Naive thymus-derived CD4-positive, alpha-beta T cell (primary cell): ENCODE measurements at regions of chr12 and their contacts with region 1.

Region 1: GRCh38 chr12:46153268-46153872 is 115.5 kb downstream of the SLC38A1 start:
- DNase-seq: peak in 6 of 9 donors; percentile 26 to 61 (median 47)
- ATAC-seq: no peak
- H3K4me3 ChIP-seq: no peak overlapping the region
- H3K4me3 Mint-ChIP-seq: peak overlapping the region in 4 of 10 donors; percentile 31 to 52 (median 40)
- H3K27ac ChIP-seq: no peak overlapping the region
- H3K27ac Mint-ChIP-seq: no peak overlapping the region
- H3K4me1 ChIP-seq: peaks cover 0 to 17% of the 10 kb centered on the region in 2 donors
- H3K4me1 Mint-ChIP-seq: peaks cover 3 to 31% (median 13%) of the 10 kb centered on the region in 7 donors
- H3K27me3 ChIP-seq: no peaks in the 10 kb centered on the region
- H3K27me3 Mint-ChIP-seq: peaks cover 0 to 19% (median 4%) of the 10 kb centered on the region in 5 donors

Region 2: DNA sequence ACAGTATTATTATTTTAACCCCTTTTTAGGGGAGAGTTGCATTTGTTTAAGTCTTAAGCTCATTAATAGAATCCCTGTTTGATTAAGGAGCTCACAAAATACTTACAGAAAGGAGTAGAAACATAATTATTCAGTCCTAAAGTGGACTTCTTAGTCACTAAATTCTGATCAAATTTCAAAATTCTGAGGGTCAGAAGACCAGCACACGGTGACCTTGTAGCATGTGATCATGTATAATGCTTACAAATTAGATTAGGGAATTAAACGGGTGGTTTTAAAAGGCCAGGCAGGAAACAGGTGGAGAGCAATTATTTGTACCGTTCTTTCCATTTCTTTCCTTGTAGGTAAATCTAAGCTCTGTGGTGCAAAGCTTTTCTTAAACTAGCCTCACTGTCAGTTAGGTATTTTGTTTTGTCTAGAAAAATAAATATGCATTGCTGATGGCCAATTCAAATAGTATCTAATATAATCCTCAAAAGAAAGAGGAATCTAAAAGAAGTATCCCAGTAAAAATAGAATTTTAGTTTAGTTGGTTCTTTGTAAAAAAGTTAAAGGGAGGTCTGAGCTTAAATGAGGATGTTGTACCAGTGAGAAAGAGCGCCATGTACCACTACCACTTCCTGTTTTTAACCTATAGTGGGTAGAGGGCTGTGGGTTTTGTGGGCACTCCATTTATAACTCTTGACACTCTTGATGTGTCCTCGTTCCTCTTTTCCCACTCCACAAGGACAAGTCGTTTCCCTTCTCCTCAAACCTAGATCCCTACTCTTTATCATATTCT is 64.4 kb after region 1 on chr12:
- CTCF ChIA-PET with region 1: no interaction called
- POLR2A ChIA-PET with region 1: interaction called, 4 read pairs
- intact Hi-C with region 1: loop called in 1 of 2 experiments (anchors 2 kb)
- DNase-seq: peak in 8 of 9 donors; percentile 58 to 87 (median 84)
- ATAC-seq: peak; percentile 54
- H3K4me3 ChIP-seq: peak overlapping the region; percentile 41
- H3K4me3 Mint-ChIP-seq: peak overlapping the region; percentile 74 to 89 (median 81)
- H3K27ac ChIP-seq: peak overlapping the region; percentile 78
- H3K27ac Mint-ChIP-seq: peak overlapping the region; percentile 89 to 100 (median 99)
- H3K4me1 ChIP-seq: peaks cover 95% of the 10 kb centered on the region in 2 donors
- H3K4me1 Mint-ChIP-seq: peaks cover 69 to 100% (median 98%) of the 10 kb centered on the region in 7 donors
- H3K27me3 ChIP-seq: no peaks in the 10 kb centered on the region
- H3K27me3 Mint-ChIP-seq: no peaks in the 10 kb centered on the region

Region 3: GRCh38 chr12:46364777-46365580 is 211.6 kb after region 1 on chr12:
- CTCF ChIA-PET with region 1: no interaction called
- POLR2A ChIA-PET with region 1: interaction called, 4 read pairs
- intact Hi-C with region 1: loop called (anchors 2 to 5 kb)
- DNase-seq: no peak
- ATAC-seq: no peak
- H3K4me3 ChIP-seq: no peak overlapping the region
- H3K4me3 Mint-ChIP-seq: peak overlapping the region in 3 of 10 donors; percentile 27 to 56 (median 45)
- H3K27ac ChIP-seq: peak overlapping the region; percentile 38
- H3K27ac Mint-ChIP-seq: peak overlapping the region in 7 of 9 donors; percentile 34 to 78 (median 61)
- H3K4me1 ChIP-seq: peaks cover 31 to 50% of the 10 kb centered on the region in 2 donors
- H3K4me1 Mint-ChIP-seq: peaks cover 51 to 92% (median 86%) of the 10 kb centered on the region in 7 donors
- H3K27me3 ChIP-seq: no peaks in the 10 kb centered on the region
- H3K27me3 Mint-ChIP-seq: no peaks in the 10 kb centered on the region

Region 4: DNA sequence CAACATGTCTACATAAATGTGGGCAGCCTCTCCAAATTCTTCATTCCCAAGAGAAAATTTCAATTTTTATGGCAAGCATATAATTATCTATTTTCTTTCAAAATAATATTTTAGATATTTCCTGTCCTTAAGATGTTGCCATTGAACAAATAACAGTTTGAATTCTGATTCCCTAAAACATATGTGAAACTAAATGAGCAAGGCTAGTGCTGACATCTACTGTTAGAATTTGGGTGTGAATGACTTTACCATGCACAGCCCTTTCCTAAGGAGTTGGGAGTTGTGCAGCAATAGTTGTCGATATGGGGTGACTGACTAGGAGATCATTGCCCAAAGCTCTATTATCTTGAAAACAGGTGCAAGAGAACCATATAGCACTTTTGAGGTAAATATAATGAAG is 780.6 kb after region 1 on chr12:
- CTCF ChIA-PET with region 1: no interaction called
- POLR2A ChIA-PET with region 1: no interaction called
- intact Hi-C with region 1: loop called in 1 of 2 experiments (anchors 2 kb)
- DNase-seq: peak in 3 of 9 donors; percentile 2 to 17 (median 15)
- ATAC-seq: no peak
- H3K4me3 ChIP-seq: no peak overlapping the region
- H3K4me3 Mint-ChIP-seq: no peak overlapping the region
- H3K27ac ChIP-seq: no peak overlapping the region
- H3K27ac Mint-ChIP-seq: no peak overlapping the region
- H3K4me1 ChIP-seq: no peaks in the 10 kb centered on the region
- H3K4me1 Mint-ChIP-seq: peaks cover 0 to 6% (median 0%) of the 10 kb centered on the region in 7 donors
- H3K27me3 ChIP-seq: no peaks in the 10 kb centered on the region
- H3K27me3 Mint-ChIP-seq: peaks cover 5 to 32% (median 16%) of the 10 kb centered on the region in 5 donors

Region 5: GRCh38 chr12:47021298-47021697 is 867.9 kb after region 1 on chr12:
- CTCF ChIA-PET with region 1: no interaction called
- POLR2A ChIA-PET with region 1: no interaction called
- intact Hi-C with region 1: loop called in 1 of 2 experiments (anchors 10 kb)
- DNase-seq: peak in 7 of 9 donors; percentile 7 to 55 (median 51)
- ATAC-seq: peak; percentile 68
- H3K4me3 ChIP-seq: no peak overlapping the region
- H3K4me3 Mint-ChIP-seq: no peak overlapping the region
- H3K27ac ChIP-seq: no peak overlapping the region
- H3K27ac Mint-ChIP-seq: no peak overlapping the region
- H3K4me1 ChIP-seq: no peaks in the 10 kb centered on the region
- H3K4me1 Mint-ChIP-seq: no peaks in the 10 kb centered on the region
- H3K27me3 ChIP-seq: peaks cover 0 to 3% of the 10 kb centered on the region in 2 donors
- H3K27me3 Mint-ChIP-seq: peaks cover 4 to 31% (median 10%) of the 10 kb centered on the region in 5 donors